ENCODE measurements at regions of chr14 and their contacts with region 1.

Region 1: DNA sequence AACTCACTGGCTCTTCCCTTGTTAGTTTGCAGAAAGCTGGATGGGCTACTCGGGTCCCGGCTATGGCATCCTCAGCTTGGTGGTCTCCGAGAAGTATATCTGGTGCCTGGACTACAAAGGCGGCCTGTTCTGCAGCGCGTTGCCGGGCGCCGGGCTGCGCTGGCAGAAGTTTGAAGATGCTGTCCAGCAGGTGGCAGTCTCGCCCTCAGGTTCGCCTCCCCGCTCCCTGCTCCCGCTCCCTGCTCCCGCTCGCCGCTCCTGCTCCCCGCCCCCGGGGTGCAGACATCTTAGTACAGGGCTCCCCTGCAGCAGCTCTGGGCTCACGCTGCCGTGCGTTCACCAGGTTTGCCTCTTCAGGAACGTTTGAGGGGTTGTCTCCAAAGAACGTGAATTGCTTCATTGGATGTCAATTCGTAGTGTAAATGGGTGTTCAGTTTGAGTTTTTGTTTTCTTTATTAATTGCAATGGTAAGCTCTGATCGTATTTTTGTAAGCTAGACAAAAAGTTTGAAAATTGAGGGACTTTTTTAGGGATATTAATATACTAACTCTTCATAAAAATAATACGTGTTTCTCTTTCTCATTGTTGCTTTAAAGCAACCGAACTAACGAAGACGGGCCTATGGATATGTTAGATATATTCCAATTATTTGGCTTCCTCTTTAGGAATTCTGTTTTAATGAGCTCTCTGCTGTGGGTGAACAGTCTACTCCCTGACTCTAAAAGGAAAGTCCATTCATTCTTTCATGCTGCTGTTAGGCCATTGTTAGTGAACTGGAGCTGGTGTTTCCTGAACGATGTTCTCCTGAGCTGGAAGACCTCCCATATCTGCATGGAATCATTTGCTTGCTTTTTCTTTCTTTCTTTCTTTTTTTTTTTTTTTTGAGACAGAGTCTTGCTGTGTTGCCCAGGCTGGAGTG is 71.3 kb downstream of the ANKRD9 start:
- DNase-seq: peak; percentile 79
- H3K4me3 Mint-ChIP-seq: no peak overlapping the region
- H3K27ac Mint-ChIP-seq: no peak overlapping the region
- H3K4me1 Mint-ChIP-seq: peaks cover 2% of the 10 kb centered on the region
- H3K27me3 Mint-ChIP-seq: no peaks in the 10 kb centered on the region

Region 2: DNA sequence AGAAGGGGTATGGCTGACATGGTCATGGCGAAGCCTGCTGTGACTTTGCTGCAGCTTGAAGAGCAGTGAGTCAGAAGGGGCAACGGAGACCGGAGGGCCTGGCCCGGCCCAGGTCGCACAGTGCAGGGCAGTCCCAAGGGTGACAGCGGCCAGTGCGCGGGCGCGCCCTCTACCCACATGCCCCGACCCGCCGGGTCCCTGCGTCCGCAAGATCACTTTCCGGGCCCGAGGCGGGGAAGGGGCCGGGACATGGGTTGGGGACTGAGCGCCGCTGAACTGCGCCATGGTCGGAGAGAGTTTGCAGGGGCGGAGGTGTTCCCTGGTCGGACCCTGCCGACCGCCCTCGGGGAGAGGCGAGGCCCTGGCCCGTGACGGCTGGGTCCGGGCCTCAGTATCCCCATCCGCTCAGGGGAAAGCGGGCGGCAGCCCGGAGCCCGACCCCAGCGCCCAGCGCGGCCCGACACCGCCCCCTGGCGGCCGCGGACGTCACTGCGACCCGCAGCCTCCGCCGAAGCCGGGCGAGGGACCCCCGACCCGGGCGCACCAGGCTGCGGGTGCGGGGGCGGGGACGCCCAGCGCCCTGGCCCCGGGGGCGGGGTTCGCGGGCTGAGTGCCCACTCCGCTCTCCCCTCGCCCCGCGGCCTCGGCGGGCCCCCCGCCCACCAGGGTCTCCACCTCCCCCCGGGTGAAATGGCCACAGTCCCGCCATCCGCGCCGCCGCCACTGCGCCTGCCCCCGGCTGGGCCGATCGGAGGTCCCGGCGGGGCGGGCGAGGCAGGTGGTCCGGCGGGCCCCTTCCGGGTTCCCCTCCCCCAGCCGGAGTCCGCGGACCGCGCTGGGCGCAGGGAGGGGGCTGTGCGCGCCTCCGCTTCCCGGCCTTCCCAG is 78.5 kb after region 1 on chr14:
- CTCF ChIA-PET with region 1: interaction called, 19 read pairs
- DNase-seq: peak; percentile 71
- H3K4me3 Mint-ChIP-seq: peak overlapping the region; percentile 64
- H3K27ac Mint-ChIP-seq: peak overlapping the region; percentile 16
- H3K4me1 Mint-ChIP-seq: peaks cover 8% of the 10 kb centered on the region
- H3K27me3 Mint-ChIP-seq: peaks cover 51% of the 10 kb centered on the region